HEK293 (cell line): ENCODE measurements at regions of chr11 and their contacts with region 1.

Region 1: DNA sequence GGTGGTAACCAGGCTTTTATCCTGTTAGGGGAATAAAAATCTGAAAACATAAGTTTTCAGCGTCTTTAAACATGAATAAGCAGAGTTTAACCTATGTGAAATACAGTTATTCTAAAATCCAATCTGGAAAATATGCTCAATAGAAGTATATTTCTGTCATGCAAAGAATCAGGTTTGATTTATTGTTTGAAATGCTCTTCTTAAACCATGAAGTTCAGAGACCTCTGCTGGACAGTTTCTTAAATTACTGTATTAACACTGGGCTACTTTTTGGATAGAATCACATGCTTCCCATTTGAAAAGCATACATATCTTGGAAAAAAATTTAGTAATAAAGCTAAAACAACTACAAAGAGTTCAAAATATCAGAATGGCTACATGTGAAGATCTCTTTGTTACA is 25.4 kb downstream of the APIP start:
- H3K4me3 ChIP-seq: no peak overlapping the region
- H3K27ac ChIP-seq: no peak overlapping the region
- H3K4me1 ChIP-seq: no peaks in the 10 kb centered on the region
- CTCF ChIP-seq: no peak

Region 2: GRCh38 chr11:34512840-34513681 is 377.8 kb before region 1 on chr11:
- CTCF ChIA-PET with region 1: interaction called, 11 read pairs
- POLR2A ChIA-PET with region 1: no interaction called
- H3K4me3 ChIP-seq: no peak overlapping the region
- H3K27ac ChIP-seq: no peak overlapping the region
- H3K4me1 ChIP-seq: no peaks in the 10 kb centered on the region
- CTCF ChIP-seq: 0 out of 2 replicates have a peak, but pooled peaks have one; percentile 20

Region 3: DNA sequence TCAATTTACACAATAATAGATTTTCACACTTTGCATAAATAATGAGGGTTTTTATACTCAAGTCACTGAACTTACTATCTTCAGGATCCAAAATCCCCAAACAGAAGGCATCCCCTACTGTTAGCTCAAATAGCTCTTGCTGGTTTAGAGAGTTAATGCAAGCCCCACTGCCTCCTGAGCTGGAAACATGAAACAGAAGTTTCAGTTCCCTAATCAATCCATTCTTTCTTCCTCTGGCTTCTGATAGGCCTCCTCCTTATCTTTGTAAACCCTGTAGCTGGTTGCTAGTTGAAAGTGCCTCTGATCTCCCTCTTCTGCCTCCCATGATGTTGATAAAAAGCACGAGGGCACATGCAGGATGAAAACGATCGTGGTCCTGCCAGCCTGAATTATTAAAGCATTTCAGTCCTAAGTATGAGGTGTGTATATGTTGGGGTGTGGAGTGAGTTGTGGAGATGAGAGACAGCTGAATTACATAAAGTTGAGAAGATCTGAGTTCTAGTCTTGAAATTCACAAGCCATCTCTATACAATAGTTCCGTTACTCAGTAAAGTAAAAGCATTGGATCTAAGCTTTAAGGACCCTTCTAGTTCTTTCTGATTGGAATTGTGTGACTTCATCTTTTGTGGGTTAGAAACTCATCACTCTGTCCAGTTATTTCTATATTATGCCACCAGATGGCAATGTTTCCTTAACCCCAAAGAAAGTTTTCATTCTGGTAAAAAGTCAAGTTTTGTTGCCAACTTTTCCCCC is 304.9 kb before region 1 on chr11:
- CTCF ChIA-PET with region 1: interaction called, 103 read pairs
- POLR2A ChIA-PET with region 1: no interaction called
- H3K4me3 ChIP-seq: 0 out of 2 replicates have a peak overlapping the region, but pooled peaks have one; percentile 8
- H3K27ac ChIP-seq: no peak overlapping the region
- H3K4me1 ChIP-seq: no peaks in the 10 kb centered on the region
- CTCF ChIP-seq: no peak

Region 4: DNA sequence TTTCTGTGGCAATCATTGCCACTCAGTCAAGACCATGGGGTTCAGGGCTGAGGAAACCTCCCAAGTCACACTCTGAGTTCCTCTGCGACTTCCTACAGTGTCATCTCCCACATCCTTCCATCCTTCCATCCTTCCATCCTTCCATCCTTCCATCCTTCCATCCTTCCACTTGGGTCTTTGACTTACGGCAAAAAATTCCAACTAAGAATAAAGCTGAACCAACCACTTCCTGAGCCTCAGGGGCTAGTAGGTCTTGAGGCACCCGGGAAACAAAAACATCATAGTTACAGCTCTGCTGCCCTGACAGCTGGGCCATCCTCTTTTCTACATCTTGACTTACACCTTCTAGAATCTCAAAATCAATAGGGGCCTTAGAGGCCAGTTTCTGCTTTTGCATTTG is 237.8 kb before region 1 on chr11:
- CTCF ChIA-PET with region 1: no interaction called
- POLR2A ChIA-PET with region 1: no interaction called
- H3K4me3 ChIP-seq: no peak overlapping the region
- H3K27ac ChIP-seq: no peak overlapping the region
- H3K4me1 ChIP-seq: no peaks in the 10 kb centered on the region
- CTCF ChIP-seq: no peak

Region 5: GRCh38 chr11:34791780-34792542 is 98.9 kb before region 1 on chr11:
- CTCF ChIA-PET with region 1: interaction called, 11 read pairs
- POLR2A ChIA-PET with region 1: no interaction called
- H3K4me3 ChIP-seq: no peak overlapping the region
- H3K27ac ChIP-seq: no peak overlapping the region
- H3K4me1 ChIP-seq: no peaks in the 10 kb centered on the region
- CTCF ChIP-seq: no peak

Region 6: GRCh38 chr11:34940026-34940677 is 49.3 kb after region 1 on chr11:
- CTCF ChIA-PET with region 1: no interaction called
- POLR2A ChIA-PET with region 1: no interaction called
- H3K4me3 ChIP-seq: no peak overlapping the region
- H3K27ac ChIP-seq: no peak overlapping the region
- H3K4me1 ChIP-seq: no peaks in the 10 kb centered on the region
- CTCF ChIP-seq: no peak